ENCODE measurements at regions of chr14 and their contacts with region 1.

Region 1: GRCh38 chr14:58107947-58108552 is 44.0 kb downstream of the ARMH4 start:
- DNase-seq: peak in 1 of 2 donors; percentile 40
- ATAC-seq: peak in 3 of 8 donors; percentile 42 to 66 (median 51)
- H3K4me3 ChIP-seq: no peak overlapping the region
- H3K27ac ChIP-seq: no peak overlapping the region
- H3K4me1 ChIP-seq: peaks cover 0 to 29% (median 9%) of the 10 kb centered on the region in 9 donors
- H3K27me3 ChIP-seq: no peaks in the 10 kb centered on the region
- CTCF ChIP-seq: peak; percentile 71 to 88 (median 82)

Region 2: GRCh38 chr14:58152014-58152857 is 44.2 kb after region 1 on chr14 and contains the start of gene ARMH4:
- intact Hi-C with region 1: loop called in 1 of 10 experiments (anchors 5 kb)
- DNase-seq: peak; percentile 84 to 85
- ATAC-seq: peak; percentile 97 to 99 (median 98)
- H3K4me3 ChIP-seq: peak within 1 kb of the TSS; percentile 57 to 96 (median 86)
- H3K27ac ChIP-seq: peak within 1 kb of the TSS in 9 of 10 donors; percentile 31 to 79 (median 61)
- H3K4me1 ChIP-seq: peaks cover 3 to 23% (median 10%) of the 10 kb centered on the region in 9 donors
- H3K27me3 ChIP-seq: peaks cover 0 to 50% (median 0%) of the 10 kb centered on the region in 7 donors
- CTCF ChIP-seq: peak in 6 of 9 donors; percentile 19 to 57 (median 32)
- total RNA-seq, gene ARMH4: 6.5 to 13.1 (median 9.1) TPM

Region 3: GRCh38 chr14:58160561-58160960 is 52.5 kb after region 1 on chr14:
- intact Hi-C with region 1: loop called in 5 of 10 experiments (anchors 2 to 5 kb)
- DNase-seq: no peak
- ATAC-seq: no peak
- H3K4me3 ChIP-seq: no peak overlapping the region
- H3K27ac ChIP-seq: no peak overlapping the region
- H3K4me1 ChIP-seq: no peaks in the 10 kb centered on the region
- H3K27me3 ChIP-seq: peaks cover 0 to 6% (median 0%) of the 10 kb centered on the region in 7 donors
- CTCF ChIP-seq: no peak

Region 4: GRCh38 chr14:58171090-58171489 is 63.0 kb after region 1 on chr14:
- intact Hi-C with region 1: loop called in 7 of 10 experiments (anchors 1 to 5 kb)
- DNase-seq: peak; percentile 33 to 46
- ATAC-seq: peak; percentile 76 to 95 (median 84)
- H3K4me3 ChIP-seq: no peak overlapping the region
- H3K27ac ChIP-seq: no peak overlapping the region
- H3K4me1 ChIP-seq: peaks cover 0 to 12% (median 4%) of the 10 kb centered on the region in 9 donors
- H3K27me3 ChIP-seq: no peaks in the 10 kb centered on the region
- CTCF ChIP-seq: no peak

Region 5: DNA sequence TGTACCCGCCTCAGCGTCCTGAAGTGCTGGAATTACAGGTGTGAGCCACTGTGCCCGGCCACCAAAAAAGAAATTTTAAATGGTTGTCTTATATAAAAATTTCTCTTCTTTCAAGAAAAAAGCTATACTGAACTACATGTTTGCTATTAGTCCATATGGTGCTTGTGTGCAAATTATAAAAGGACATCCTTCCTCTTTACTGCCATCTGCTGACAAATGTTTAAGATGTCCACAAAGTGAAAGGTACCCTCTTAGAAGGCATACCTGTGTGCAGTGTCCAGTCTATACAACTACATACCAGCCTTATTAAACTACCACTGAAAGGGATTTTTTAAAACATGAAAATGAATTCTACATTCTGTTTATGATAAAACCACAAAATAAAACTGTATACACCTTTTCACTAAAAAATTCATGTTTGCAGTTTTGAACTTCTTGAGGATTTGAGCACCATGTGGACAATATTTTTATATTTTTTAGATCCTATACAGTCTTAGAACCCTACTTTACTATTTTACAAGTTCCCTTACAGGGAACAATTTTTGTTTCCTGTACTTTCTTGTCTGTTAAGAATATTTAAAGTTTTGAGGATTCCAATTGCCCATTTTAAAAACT is 254.9 kb after region 1 on chr14:
- intact Hi-C with region 1: loop called in 2 of 10 experiments (anchors 10 kb)
- DNase-seq: no peak
- ATAC-seq: no peak
- H3K4me3 ChIP-seq: no peak overlapping the region
- H3K27ac ChIP-seq: no peak overlapping the region
- H3K4me1 ChIP-seq: no peaks in the 10 kb centered on the region
- H3K27me3 ChIP-seq: no peaks in the 10 kb centered on the region
- CTCF ChIP-seq: peak in 6 of 9 donors; percentile 33 to 47 (median 38)

Region 6: GRCh38 chr14:58395812-58396788 is 288.1 kb after region 1 on chr14 and contains the start of gene TOMM20L:
- intact Hi-C with region 1: loop called in 3 of 10 experiments (anchors 5 to 10 kb)
- DNase-seq: peak; percentile 73 to 81
- ATAC-seq: peak; percentile 87 to 97 (median 93)
- H3K4me3 ChIP-seq: peak within 1 kb of the TSS; percentile 47 to 67 (median 56)
- H3K27ac ChIP-seq: peak within 1 kb of the TSS in 9 of 10 donors; percentile 60 to 87 (median 80)
- H3K4me1 ChIP-seq: peaks cover 0 to 13% (median 5%) of the 10 kb centered on the region in 9 donors
- H3K27me3 ChIP-seq: no peaks in the 10 kb centered on the region
- CTCF ChIP-seq: peak; percentile 76 to 97 (median 88)
- total RNA-seq, gene TOMM20L: not detected

Region 7: DNA sequence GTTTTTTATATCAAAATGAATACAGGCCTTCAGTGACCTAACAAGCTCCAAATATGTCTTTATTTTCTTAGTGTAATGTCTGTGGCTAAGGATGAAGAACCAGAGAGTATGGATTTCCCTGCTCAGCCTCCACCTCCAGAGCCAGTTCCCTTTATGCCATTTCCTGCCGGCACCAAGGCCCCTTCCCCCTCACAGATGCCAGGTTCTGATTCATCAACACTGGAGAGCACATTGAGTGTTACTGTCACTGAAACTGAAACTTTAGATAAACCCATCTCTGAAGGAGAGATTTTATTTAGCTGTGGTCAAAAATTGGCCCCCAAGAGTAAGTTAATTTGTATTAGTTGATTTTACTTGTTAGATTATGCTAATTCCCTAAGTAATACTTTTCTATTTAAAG is 380.5 kb after region 1 on chr14:
- intact Hi-C with region 1: no loop called
- DNase-seq: no peak
- ATAC-seq: no peak
- H3K4me3 ChIP-seq: no peak overlapping the region
- H3K27ac ChIP-seq: no peak overlapping the region
- H3K4me1 ChIP-seq: no peaks in the 10 kb centered on the region
- H3K27me3 ChIP-seq: no peaks in the 10 kb centered on the region
- CTCF ChIP-seq: no peak